Pancreas (tissue), 10 donors: ENCODE measurements at regions of chr20 and their contacts with region 1.

Region 1: DNA sequence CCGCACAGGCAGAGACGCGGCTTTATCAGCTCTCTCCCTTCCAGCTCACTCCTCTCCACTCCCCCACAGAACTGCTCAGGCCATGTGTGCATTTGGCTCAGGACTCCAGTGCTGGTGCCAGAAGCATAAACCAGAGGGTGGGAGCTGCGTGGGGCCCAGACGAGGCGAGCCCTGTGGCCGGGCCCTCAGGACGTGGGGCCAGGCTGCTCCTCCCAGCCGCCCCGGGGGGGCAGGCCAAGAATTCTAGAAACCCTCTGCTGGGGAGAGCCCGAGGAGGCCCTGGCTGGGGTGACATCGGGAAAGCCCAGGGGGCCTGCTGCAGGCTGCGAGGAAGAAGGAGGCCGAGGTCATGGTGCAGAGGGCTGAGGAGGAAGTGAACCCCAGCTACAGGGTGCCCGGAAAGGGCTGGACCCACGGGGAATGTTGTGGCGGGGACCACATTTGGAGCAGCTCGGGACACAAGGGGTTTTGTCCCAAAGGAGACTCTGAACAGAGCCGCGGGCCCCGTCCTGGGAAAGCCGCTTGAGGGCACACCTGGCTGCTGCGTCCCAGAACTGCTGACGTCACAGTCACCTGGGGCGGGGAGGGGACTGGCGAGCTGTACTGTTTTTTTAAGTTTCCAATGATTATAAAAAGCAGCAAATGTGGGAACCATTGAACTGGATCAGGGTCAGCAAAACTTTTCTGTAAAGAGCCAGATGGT is 107.1 kb downstream of the BANF2 start:
- DNase-seq: peak; percentile 91 to 98 (median 94)
- ATAC-seq: peak; percentile 87 to 91 (median 90)
- H3K4me3 ChIP-seq: peak overlapping the region in 1 of 4 donors; percentile 7
- H3K27ac ChIP-seq: peak overlapping the region; percentile 87 to 96 (median 96)
- H3K4me1 ChIP-seq: peaks cover 19 to 38% (median 26%) of the 10 kb centered on the region in 3 donors
- H3K27me3 ChIP-seq: no peaks in the 10 kb centered on the region
- CTCF ChIP-seq: no peak

Region 2: DNA sequence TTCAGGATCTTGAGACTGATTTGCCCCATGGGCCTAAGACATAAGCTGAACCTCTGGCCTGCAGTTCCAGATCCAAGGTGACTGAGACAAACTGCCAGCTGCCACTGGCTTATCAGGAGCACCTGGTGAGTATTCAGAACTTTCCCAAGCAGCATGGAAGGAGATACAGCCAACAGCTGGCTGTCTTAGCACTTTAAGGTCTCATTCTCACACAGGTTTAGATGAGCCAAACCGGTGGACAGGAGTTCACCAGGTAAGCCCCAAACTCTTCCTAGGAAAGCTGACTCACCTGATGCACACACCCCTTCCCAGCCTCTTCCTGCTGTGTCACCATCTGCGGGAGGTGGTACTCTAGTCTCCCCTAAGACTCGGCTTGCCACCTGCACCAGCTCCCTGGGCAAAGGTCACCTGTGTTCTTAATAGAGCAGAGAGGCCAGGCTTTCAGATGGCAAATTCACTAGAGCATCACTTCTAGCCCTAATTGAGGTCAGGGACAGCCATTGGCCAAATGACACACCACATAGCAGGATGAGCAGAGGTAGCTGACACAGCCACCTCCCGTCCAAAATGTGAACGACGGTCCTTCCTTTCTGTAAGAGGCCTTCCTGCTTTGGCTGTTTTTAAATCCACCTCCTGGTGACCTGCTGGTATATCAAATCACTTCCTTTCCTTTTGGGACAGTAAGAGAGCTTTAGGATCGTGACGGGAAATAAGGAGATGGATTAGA is 106.8 kb before region 1 on chr20 and contains the start of gene BANF2:
- intact Hi-C with region 1: loop called in 1 of 3 experiments (anchors 10 kb)
- DNase-seq: peak in 5 of 6 donors; percentile 71 to 88 (median 79)
- ATAC-seq: peak; percentile 75 to 85 (median 82)
- H3K4me3 ChIP-seq: no peak within 1 kb of the TSS
- H3K27ac ChIP-seq: peak within 1 kb of the TSS; percentile 56 to 77 (median 66)
- H3K4me1 ChIP-seq: peaks cover 28 to 33% (median 32%) of the 10 kb centered on the region in 3 donors
- H3K27me3 ChIP-seq: no peaks in the 10 kb centered on the region
- CTCF ChIP-seq: no peak
- total RNA-seq, gene BANF2: 0.88 to 6.4 (median 2.0) TPM

Region 3: DNA sequence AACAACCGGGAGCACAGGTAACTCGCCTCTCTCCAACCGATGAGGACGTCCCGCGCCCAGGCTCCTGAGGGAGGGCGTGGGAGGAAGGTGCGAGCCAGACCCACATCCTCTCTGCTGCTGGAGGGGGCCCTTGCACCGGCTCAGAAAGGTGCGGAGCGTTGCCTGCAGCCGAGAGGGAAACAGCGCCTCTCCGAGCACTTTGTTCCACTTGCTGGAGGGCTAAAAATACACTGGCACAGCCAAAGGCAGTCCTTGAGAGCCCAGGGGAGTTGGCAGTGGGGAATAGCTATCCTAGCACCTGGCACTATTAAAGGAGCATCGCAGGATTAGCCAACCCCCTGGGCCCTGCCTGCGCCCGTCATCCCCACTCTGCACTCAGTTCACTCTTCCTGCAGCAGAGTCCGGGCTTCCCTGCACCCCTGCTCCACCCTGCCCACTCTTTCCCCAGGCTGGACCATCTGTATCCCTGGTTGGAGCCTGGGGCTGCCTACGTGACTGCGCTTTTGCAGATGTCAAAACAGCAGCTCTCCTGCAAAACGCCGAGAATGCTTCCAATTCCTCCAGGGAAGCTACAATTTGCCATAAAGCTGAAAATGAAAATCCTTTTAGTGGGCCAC is 52.8 kb after region 1 on chr20:
- intact Hi-C with region 1: loop called in 1 of 3 experiments (anchors 10 kb)
- DNase-seq: peak in 5 of 6 donors; percentile 63 to 76 (median 66)
- ATAC-seq: peak; percentile 63 to 75 (median 72)
- H3K4me3 ChIP-seq: no peak overlapping the region
- H3K27ac ChIP-seq: peak overlapping the region; percentile 11 to 68 (median 52)
- H3K4me1 ChIP-seq: peaks cover 20 to 36% (median 29%) of the 10 kb centered on the region in 3 donors
- H3K27me3 ChIP-seq: no peaks in the 10 kb centered on the region
- CTCF ChIP-seq: no peak

Region 4: DNA sequence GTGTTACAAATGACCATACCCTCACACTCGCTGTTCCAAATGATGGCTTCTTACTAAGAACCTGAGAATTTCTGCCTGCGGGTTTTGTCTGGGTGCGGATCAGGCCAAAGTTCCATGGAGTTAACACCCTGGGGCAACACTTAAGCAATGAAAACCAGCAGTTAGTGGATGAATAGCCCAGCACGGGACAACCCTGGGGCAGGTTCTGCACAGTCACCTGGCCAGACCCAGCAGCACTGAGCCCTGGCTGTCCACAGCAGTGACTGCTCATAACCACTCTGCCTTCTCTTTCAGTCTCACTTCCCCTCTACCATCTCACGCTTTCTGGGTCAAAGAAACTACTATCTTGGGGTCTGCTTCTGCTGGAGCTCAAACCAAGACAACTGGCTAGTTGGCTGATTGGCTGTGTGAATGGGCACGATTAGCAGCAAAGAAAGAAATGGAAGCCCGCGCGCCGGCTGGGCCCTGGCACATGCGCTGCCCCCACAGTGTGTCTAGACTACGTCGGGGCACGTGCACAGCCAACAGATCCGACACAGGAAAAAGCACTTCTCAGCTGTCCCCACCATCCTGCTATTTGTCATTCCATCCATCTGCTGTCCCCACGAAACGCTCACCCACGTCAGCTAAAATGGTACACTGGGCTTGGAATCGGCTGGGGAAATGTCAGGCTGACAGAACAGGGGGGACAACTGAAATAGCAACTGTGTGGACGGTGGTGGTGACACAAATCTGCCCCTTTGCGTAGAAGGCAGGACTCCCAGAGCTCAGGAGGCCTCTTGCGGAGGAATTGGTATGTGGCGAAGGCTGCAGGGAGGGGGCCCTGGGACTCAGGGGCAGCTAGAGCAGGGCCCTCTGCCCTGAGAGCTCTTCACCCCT is 198.6 kb after region 1 on chr20:
- intact Hi-C with region 1: no loop called
- DNase-seq: no peak
- ATAC-seq: no peak
- H3K4me3 ChIP-seq: no peak overlapping the region
- H3K27ac ChIP-seq: no peak overlapping the region
- H3K4me1 ChIP-seq: no peaks in the 10 kb centered on the region
- H3K27me3 ChIP-seq: no peaks in the 10 kb centered on the region
- CTCF ChIP-seq: no peak